Activated CD4-positive, alpha-beta T cell treated with anti-CD3 and anti-CD28 coated beads, Interleukin-2, amount 10 ng/mL, durations not matched to agents 7 days and 5 days (primary cell): ENCODE measurements at regions of chr7 and their contacts with region 1.

Region 1: DNA sequence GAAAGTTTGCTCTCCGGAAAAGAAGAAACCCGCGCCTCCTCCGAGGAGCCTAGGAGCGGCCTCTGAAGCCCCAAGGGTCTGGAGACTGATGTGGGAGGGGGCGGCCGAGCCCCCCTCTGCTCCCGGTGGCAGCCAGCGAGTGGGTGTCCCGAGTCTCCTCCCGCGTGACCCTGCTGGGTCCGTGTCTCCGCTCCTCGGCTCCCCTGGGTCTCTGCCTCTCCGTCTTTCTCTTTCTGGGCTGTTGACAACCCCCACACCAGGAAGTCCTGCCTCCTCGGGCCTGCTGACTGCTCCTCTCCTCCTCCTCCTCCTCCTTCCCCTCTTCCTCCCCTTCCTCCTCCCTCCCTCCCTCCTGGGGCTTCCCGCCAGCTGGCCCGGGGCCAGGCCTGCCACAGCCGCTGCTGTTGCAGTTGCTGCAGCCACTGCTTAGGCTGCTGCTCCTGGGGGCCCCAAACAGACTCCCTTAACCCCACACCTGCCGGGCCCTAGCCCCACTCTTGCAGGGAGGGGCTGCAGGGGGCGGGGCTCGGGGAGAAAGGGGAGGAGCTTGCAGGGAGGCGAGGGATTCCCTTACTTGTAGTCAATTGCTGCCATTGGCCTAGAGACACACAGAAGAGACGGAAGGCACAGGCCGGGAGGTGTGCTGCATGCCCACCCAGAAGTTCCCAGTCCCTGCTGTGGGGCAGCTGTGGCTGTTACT is at the start of gene TSC22D4:
- DNase-seq: peak; percentile 94
- H3K4me3 Mint-ChIP-seq: peak within 1 kb of the TSS; percentile 98
- H3K27ac Mint-ChIP-seq: peak within 1 kb of the TSS; percentile 93
- H3K4me1 Mint-ChIP-seq: peaks cover 44% of the 10 kb centered on the region
- H3K27me3 Mint-ChIP-seq: no peaks in the 10 kb centered on the region
- total RNA-seq, gene TSC22D4: 113 to 128 TPM

Region 2: GRCh38 chr7:100489824-100490223 is 10.7 kb after region 1 on chr7:
- CTCF ChIA-PET with region 1: interaction called, 12 read pairs
- POLR2A ChIA-PET with region 1: no interaction called
- DNase-seq: peak; percentile 70
- H3K4me3 Mint-ChIP-seq: no peak overlapping the region
- H3K27ac Mint-ChIP-seq: no peak overlapping the region
- H3K4me1 Mint-ChIP-seq: peaks cover 24% of the 10 kb centered on the region
- H3K27me3 Mint-ChIP-seq: peaks cover 4% of the 10 kb centered on the region